ENCODE measurements at regions of chr14 and their contacts with region 1.

Region 1: DNA sequence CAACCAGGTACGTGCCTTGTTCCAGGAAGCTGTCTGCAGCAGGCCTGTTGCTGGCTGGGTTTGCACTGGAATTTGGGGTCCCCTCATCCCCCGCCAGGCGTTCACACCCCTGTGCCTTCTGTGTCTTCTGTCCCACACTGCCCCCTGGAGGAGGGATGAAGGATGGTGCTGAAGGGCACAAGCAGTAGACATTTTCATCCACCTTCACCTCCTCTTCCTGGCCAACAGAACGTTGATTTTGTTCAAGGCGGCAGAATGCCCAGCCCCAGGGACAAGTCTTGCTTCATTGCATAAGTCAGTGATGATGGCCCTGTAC is 122.1 kb downstream of the CALM1 start:
- DNase-seq: no peak
- ATAC-seq: peak; percentile 37
- H3K4me3 Mint-ChIP-seq: no peak overlapping the region
- H3K27ac Mint-ChIP-seq: no peak overlapping the region
- H3K4me1 Mint-ChIP-seq: no peaks in the 10 kb centered on the region
- H3K27me3 Mint-ChIP-seq: no peaks in the 10 kb centered on the region
- CTCF ChIP-seq: no peak

Region 2: GRCh38 chr14:90368946-90369721 is 149.8 kb before region 1 on chr14:
- CTCF ChIA-PET with region 1: no interaction called
- POLR2A ChIA-PET with region 1: no interaction called
- intact Hi-C with region 1: loop called (anchors 1 kb)
- DNase-seq: no peak
- ATAC-seq: peak; percentile 18
- H3K4me3 Mint-ChIP-seq: no peak overlapping the region
- H3K27ac Mint-ChIP-seq: no peak overlapping the region
- H3K4me1 Mint-ChIP-seq: no peaks in the 10 kb centered on the region
- H3K27me3 Mint-ChIP-seq: peaks cover 10% of the 10 kb centered on the region
- CTCF ChIP-seq: no peak